ENCODE measurements at regions of chr3 and their contacts with region 1.

Region 1: DNA sequence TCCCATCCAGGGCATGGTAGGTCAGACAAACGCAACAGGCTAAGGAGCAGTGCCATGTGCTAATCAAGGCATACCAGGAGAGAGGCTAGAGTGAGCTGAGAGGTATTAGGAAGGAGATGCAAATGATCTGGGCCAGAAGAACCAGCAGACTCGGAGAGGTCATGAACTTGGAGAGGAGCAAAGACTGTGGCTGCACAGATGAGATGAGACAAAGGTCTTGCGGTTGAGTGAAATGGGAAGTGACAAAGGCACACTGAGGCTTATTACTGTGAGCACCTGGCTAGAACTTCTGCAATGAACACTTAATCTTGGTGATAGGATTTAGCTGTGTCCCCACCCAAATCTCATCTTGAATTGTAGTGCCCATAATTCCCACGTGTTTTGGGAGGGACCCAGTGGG is 380.2 kb downstream of the ULK4 start:
- DNase-seq: no peak
- H3K4me3 ChIP-seq: no peak overlapping the region
- H3K27ac ChIP-seq: no peak overlapping the region
- H3K4me1 ChIP-seq: no peaks in the 10 kb centered on the region
- H3K27me3 ChIP-seq: no peaks in the 10 kb centered on the region
- CTCF ChIP-seq: no peak
- POLR2A ChIP-seq: no peak

Region 2: DNA sequence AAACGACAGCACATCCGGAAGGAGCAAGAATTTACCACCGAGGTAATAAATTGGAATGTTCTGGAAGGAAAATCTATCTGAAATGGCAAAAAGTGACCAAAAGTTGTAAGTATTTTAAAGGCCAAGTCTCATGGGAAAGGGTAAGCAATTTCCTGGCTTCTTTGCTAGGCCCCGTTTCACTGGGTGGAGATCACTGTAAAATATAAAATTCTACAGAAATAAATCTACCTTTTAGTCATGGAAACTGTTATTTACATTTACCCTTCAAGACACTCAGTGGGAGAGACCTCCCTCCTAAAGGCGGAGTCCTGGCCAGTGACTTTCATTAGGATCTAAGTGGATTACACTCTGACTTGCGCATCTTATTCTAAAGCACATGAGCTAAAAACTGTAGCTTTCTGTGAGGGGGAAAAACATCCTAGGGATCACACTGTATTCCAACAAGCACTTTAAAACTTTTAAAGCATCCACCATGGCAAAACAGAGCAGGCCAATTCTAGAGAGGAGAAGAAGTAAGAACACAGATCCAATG is 799.9 kb after region 1 on chr3:
- intact Hi-C with region 1: loop called (anchors 5 kb)
- DNase-seq: no peak
- H3K4me3 ChIP-seq: no peak overlapping the region
- H3K27ac ChIP-seq: no peak overlapping the region
- H3K4me1 ChIP-seq: no peaks in the 10 kb centered on the region
- H3K27me3 ChIP-seq: no peaks in the 10 kb centered on the region
- CTCF ChIP-seq: no peak
- POLR2A ChIP-seq: no peak

Measured in breast epithelium (tissue), 4 donors.